Mammary epithelial cell (primary cell): ENCODE measurements at regions of chr5 and their contacts with region 1.

Region 1: DNA sequence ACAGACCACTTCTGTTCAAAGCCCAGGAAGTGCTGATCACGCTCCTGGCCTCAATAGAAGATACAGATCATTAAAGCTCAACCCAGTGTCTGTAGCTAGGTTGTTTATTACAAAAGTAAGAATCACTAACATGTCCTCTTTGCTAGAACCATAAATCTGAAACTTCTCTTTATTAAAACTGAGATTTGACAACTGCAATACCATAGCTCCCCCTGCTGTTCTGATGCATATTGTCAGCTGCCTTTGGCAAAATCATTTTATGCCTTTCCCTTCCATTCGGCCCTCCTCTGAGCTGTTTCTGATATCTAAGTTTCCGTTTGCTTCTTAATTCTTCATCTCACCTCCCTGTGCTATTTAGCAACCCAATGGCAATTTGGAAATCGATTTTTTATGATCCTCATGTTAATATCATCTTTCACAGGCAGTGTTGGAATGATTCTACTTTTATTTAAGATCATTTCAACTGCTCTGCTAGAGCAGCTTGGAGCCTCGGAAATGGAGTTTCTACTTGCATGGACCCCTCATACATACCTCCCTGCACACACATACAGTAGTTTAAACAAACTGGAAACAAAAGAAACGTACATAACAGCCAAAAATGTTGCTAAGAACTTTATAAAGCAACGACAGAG is 998.8 kb downstream of the MAT2B start:
- DNase-seq: peak; percentile 34
- H3K4me3 ChIP-seq: no peak overlapping the region
- H3K27ac ChIP-seq: no peak overlapping the region
- H3K4me1 ChIP-seq: no peaks in the 10 kb centered on the region
- H3K27me3 ChIP-seq: peaks cover 5% of the 10 kb centered on the region
- CTCF ChIP-seq: peak; percentile 75 to 84

Region 2: GRCh38 chr5:164048359-164048926 is 455.8 kb before region 1 on chr5:
- CTCF ChIA-PET with region 1: no interaction called
- dilution Hi-C with region 1: no loop called
- in situ Hi-C with region 1: loop called in 1 of 2 experiments (anchors 25 kb)
- intact Hi-C with region 1: loop called (anchors 1 kb)
- DNase-seq: no peak
- H3K4me3 ChIP-seq: no peak overlapping the region
- H3K27ac ChIP-seq: no peak overlapping the region
- H3K4me1 ChIP-seq: no peaks in the 10 kb centered on the region
- H3K27me3 ChIP-seq: no peaks in the 10 kb centered on the region
- CTCF ChIP-seq: peak; percentile 33 to 46

Region 3: GRCh38 chr5:164672931-164673694 is 168.9 kb after region 1 on chr5:
- CTCF ChIA-PET with region 1: no interaction called
- dilution Hi-C with region 1: no loop called
- in situ Hi-C with region 1: no loop called
- intact Hi-C with region 1: loop called (anchors 5 kb)
- DNase-seq: peak; percentile 5
- H3K4me3 ChIP-seq: no peak overlapping the region
- H3K27ac ChIP-seq: no peak overlapping the region
- H3K4me1 ChIP-seq: no peaks in the 10 kb centered on the region
- H3K27me3 ChIP-seq: no peaks in the 10 kb centered on the region
- CTCF ChIP-seq: peak; percentile 28 to 50